ENCODE measurements at regions of chr5 and their contacts with region 1.

Region 1: GRCh38 chr5:88729084-88729828 is 153.7 kb downstream of the MEF2C start:
- DNase-seq: peak; percentile 34
- H3K4me3 Mint-ChIP-seq: no peak overlapping the region
- H3K27ac Mint-ChIP-seq: no peak overlapping the region
- H3K4me1 Mint-ChIP-seq: peaks cover 5% of the 10 kb centered on the region
- H3K27me3 Mint-ChIP-seq: peaks cover 12% of the 10 kb centered on the region

Region 2: GRCh38 chr5:88826646-88827585 is 97.7 kb after region 1 on chr5:
- intact Hi-C with region 1: no loop called
- DNase-seq: no peak
- H3K4me3 Mint-ChIP-seq: no peak overlapping the region
- H3K27ac Mint-ChIP-seq: peak overlapping the region; percentile 68
- H3K4me1 Mint-ChIP-seq: peaks cover 30% of the 10 kb centered on the region
- H3K27me3 Mint-ChIP-seq: peaks cover 29% of the 10 kb centered on the region

Region 3: DNA sequence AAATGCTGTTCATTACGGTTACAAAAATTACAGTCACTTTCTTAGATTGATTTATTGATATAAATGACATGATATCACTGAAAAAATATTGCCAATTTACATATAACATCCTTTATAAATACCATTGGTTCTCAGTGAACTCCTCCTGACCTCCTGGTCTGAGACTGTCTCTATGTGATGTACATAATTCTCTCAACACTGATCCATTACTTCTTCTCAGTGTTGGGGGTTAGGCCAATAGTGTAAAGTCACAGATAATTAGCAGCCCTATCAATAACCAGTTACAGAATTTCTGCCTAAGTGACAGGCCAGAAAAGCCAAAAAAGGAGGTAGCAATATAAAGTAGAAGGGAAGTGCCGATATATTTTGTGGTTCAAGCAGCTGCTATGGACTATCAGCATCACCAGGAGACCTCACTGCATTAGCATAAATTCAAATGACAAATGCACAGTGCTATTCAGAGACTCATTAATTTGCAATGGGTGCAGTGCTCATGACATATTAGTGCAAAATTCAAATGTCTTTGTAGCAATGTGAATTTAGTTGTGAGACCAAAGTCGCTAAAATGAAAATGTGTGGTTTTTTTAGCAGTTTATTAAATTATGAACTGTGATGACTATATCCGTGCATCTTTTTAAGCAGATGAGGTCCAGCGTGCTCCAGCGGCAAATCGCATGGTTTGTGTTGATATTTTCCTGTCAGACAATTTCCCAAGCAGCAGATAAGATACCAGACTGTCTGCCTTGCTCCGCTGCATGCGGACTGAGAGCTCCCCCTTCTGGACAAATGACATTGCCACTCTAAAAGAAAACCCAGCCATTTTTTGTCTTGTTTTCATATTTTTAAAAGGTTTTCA is 1535.7 kb after region 1 on chr5:
- intact Hi-C with region 1: loop called (anchors 1 kb)
- DNase-seq: peak; percentile 19
- H3K4me3 Mint-ChIP-seq: no peak overlapping the region
- H3K27ac Mint-ChIP-seq: no peak overlapping the region
- H3K4me1 Mint-ChIP-seq: no peaks in the 10 kb centered on the region
- H3K27me3 Mint-ChIP-seq: no peaks in the 10 kb centered on the region

Region 4: DNA sequence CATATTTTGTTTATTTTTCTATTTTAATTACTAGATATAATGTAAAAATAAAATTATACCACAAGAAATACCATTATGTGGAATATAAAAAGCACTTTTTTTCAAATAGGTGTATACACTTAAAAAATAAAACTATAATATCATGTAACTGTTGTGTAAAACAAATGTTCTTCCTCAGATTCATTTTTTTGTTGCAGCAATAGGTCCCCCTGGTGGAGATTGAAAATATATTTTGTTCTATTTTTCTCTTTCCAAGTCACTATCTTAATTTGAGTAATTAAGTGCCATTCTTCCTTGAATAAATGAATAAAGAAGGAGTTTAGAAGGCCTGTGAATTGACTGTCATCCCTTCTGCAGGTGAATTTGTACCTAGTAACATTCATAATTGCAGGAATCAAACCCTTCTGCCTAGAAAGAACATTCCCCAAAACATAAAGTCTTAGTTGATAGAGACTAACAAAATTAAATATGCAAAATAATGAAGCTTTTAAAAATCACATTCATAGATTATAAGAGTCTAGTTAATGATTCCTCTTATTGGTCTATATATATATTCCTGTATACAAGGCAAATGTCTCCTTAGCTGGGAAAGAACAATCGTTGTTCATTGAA is 1656.9 kb after region 1 on chr5:
- intact Hi-C with region 1: loop called (anchors 5 kb)
- DNase-seq: no peak
- H3K4me3 Mint-ChIP-seq: no peak overlapping the region
- H3K27ac Mint-ChIP-seq: no peak overlapping the region
- H3K4me1 Mint-ChIP-seq: peaks cover 6% of the 10 kb centered on the region
- H3K27me3 Mint-ChIP-seq: peaks cover 11% of the 10 kb centered on the region